ENCODE measurements at regions of chr4 and their contacts with region 1.

Region 1: GRCh38 chr4:26267087-26267486 is 53.7 kb upstream of the RBPJ start:
- DNase-seq: no peak
- H3K4me3 ChIP-seq: no peak overlapping the region
- CTCF ChIP-seq: no peak

Region 2: GRCh38 chr4:26217961-26218676 is 49.0 kb before region 1 on chr4:
- in situ Hi-C with region 1: loop called (anchors 5 kb)
- DNase-seq: no peak
- H3K4me3 ChIP-seq: no peak overlapping the region
- CTCF ChIP-seq: no peak